CD4-positive, alpha-beta T cell (primary cell): ENCODE measurements at regions of chr1 and their contacts with region 1.

Region 1: GRCh38 chr1:36149237-36149972 is at the start of gene TRAPPC3:
- DNase-seq: peak; percentile 98 to 100 (median 99)
- ATAC-seq: peak; percentile 88
- H3K4me3 ChIP-seq: peak within 1 kb of the TSS; percentile 81
- H3K4me3 Mint-ChIP-seq: peak within 1 kb of the TSS; percentile 98
- H3K27ac ChIP-seq: peak within 1 kb of the TSS; percentile 92 to 95
- H3K27ac Mint-ChIP-seq: peak within 1 kb of the TSS; percentile 95
- H3K4me1 ChIP-seq: peaks cover 65% of the 10 kb centered on the region
- H3K4me1 Mint-ChIP-seq: peaks cover 73% of the 10 kb centered on the region
- H3K27me3 ChIP-seq: no peaks in the 10 kb centered on the region
- H3K27me3 Mint-ChIP-seq: no peaks in the 10 kb centered on the region
- CTCF ChIP-seq: peak; percentile 84
- total RNA-seq, gene TRAPPC3: 18.4 to 21.3 TPM

Region 2: GRCh38 chr1:36088575-36089443 is 60.6 kb before region 1 on chr1 and contains the start of gene ADPRS:
- CTCF ChIA-PET with region 1: interaction called, 3 read pairs
- POLR2A ChIA-PET with region 1: no interaction called
- intact Hi-C with region 1: loop called in 1 of 2 experiments (anchors 1 kb)
- DNase-seq: peak; percentile 83 to 96 (median 88)
- ATAC-seq: peak; percentile 88
- H3K4me3 ChIP-seq: peak within 1 kb of the TSS; percentile 95
- H3K4me3 Mint-ChIP-seq: peak within 1 kb of the TSS; percentile 93
- H3K27ac ChIP-seq: peak within 1 kb of the TSS; percentile 73 to 83
- H3K27ac Mint-ChIP-seq: peak within 1 kb of the TSS; percentile 86
- H3K4me1 ChIP-seq: peaks cover 54% of the 10 kb centered on the region
- H3K4me1 Mint-ChIP-seq: peaks cover 23% of the 10 kb centered on the region
- H3K27me3 ChIP-seq: peaks cover 13 to 14% of the 10 kb centered on the region in 2 experiments
- H3K27me3 Mint-ChIP-seq: peaks cover 21% of the 10 kb centered on the region
- CTCF ChIP-seq: peak; percentile 96
- total RNA-seq, gene ADPRS: 22.6 to 24.6 TPM

Region 3: DNA sequence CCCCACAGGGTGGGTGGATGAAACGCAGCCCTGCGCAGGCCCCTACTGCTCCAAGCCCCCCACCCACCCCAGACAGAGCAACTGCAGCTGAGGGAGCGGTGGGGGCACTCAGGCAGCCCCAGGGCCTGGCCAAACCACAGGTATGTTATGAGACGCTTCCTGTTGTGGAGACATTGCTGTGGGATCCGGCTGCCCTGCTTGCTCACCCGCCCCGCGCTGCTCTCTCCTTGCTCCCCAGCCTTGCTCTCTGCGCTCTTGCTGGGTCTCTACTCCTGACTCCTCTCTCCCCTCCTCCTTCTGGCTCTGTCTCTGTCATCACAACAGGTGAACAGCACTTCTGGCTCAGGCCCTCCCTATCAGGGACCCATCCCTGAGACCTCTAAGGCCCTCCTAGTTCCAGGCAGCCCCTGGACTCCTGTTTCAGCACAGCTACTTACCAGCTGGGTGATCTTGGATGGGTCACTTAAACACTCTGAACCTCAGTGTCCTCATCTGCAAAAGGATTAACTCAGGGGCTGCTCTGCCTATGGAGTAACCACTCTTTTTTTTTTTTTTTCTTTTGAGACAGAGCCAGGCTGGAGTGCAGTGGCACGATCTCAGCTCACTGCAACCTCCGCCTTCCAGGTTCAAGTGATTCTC is 40.2 kb before region 1 on chr1:
- CTCF ChIA-PET with region 1: no interaction called
- POLR2A ChIA-PET with region 1: interaction called, 3 read pairs
- intact Hi-C with region 1: loop called in 1 of 2 experiments (anchors 2 kb)
- DNase-seq: peak; percentile 31 to 68 (median 57)
- ATAC-seq: peak; percentile 98
- H3K4me3 ChIP-seq: no peak overlapping the region
- H3K4me3 Mint-ChIP-seq: peak overlapping the region; percentile 34
- H3K27ac ChIP-seq: no peak overlapping the region
- H3K27ac Mint-ChIP-seq: peak overlapping the region; percentile 78
- H3K4me1 ChIP-seq: peaks cover 15% of the 10 kb centered on the region
- H3K4me1 Mint-ChIP-seq: peaks cover 36% of the 10 kb centered on the region
- H3K27me3 ChIP-seq: no peaks in the 10 kb centered on the region
- H3K27me3 Mint-ChIP-seq: no peaks in the 10 kb centered on the region
- CTCF ChIP-seq: no peak

Region 4: DNA sequence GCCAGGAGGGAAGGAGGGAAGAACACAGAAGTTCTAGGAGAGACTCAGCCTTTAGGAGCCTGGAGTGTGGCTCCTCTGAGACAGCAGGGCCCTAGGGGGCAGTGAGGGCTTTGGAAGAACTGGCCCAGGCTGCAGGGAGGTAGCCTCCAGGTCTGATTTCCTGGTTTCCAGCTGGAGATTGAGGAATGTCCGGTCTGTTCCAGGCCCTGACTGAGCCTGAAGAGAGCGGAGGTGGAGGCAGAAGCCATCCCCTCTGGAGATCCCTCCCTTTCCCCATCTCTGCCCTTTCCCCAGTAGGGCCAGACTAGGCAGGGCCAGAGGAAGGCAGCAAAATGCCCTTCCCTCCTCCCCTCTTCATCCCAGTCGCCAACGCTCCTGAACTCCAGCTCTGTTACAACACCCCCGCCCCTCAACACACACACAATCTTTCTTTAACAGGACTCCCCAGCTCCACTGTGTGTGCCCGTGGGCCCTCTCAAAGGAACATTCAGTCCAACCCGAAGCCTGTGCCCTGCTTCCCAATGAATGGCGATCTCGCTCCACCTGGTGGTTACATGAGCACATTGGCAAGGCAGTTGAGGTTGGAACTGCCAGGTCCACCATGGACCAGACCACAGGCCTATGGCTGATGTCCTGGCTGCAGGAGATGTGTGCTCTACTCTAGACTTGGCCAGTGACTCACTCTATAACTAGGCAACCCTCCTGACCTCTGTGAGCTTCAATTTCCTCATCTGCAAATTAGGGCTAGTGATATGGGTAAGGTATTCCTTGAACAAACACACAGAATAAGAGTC is 38.6 kb after region 1 on chr1:
- CTCF ChIA-PET with region 1: interaction called, 114 read pairs
- POLR2A ChIA-PET with region 1: interaction called, 75 read pairs
- intact Hi-C with region 1: loop called (anchors 1 kb)
- DNase-seq: peak; percentile 70 to 92 (median 76)
- ATAC-seq: peak; percentile 99
- H3K4me3 ChIP-seq: no peak overlapping the region
- H3K4me3 Mint-ChIP-seq: no peak overlapping the region
- H3K27ac ChIP-seq: peak overlapping the region in 1 of 2 donors; percentile 12
- H3K27ac Mint-ChIP-seq: peak overlapping the region; percentile 29
- H3K4me1 ChIP-seq: peaks cover 7% of the 10 kb centered on the region
- H3K4me1 Mint-ChIP-seq: peaks cover 10% of the 10 kb centered on the region
- H3K27me3 ChIP-seq: no peaks in the 10 kb centered on the region
- H3K27me3 Mint-ChIP-seq: no peaks in the 10 kb centered on the region
- CTCF ChIP-seq: peak; percentile 84

Region 5: GRCh38 chr1:36285448-36286101 is 136.2 kb after region 1 on chr1:
- CTCF ChIA-PET with region 1: interaction called, 27 read pairs
- POLR2A ChIA-PET with region 1: interaction called, 16 read pairs
- intact Hi-C with region 1: loop called (anchors 1 kb)
- DNase-seq: peak; percentile 22 to 92 (median 50)
- ATAC-seq: peak; percentile 99
- H3K4me3 ChIP-seq: no peak overlapping the region
- H3K4me3 Mint-ChIP-seq: no peak overlapping the region
- H3K27ac ChIP-seq: no peak overlapping the region
- H3K27ac Mint-ChIP-seq: peak overlapping the region; percentile 34
- H3K4me1 ChIP-seq: no peaks in the 10 kb centered on the region
- H3K4me1 Mint-ChIP-seq: peaks cover 25% of the 10 kb centered on the region
- H3K27me3 ChIP-seq: no peaks in the 10 kb centered on the region
- H3K27me3 Mint-ChIP-seq: no peaks in the 10 kb centered on the region
- CTCF ChIP-seq: peak; percentile 83

Region 6: DNA sequence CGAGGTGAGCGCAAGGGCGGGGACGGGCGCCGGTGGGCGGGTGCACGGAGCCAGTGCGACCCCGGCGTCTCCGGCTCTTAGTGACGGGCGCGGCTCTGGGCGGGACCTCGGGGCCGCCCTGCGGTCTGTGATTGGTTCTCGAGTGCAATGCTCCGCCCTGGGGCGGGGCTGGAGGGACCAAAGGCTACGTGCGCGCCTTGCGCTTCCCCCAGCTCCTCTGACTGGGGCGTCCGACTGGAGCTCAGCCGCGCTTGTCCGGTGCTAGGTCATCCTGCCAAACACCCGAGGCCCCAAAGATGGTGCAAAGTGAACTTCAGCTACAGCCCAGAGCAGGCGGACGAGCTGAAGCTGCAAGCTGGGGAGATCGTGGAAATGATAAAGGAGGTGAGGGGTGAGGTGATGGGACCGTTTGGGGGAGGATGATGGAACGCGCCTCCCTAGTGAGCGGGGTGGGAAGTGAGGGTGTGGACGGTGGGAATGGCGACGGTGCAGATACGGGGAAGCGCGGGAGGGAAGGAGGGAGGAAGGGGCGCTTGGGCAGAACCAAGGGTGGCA is 157.6 kb after region 1 on chr1:
- CTCF ChIA-PET with region 1: interaction called, 13 read pairs
- POLR2A ChIA-PET with region 1: interaction called, 5 read pairs
- intact Hi-C with region 1: loop called in 1 of 2 experiments (anchors 5 kb)
- DNase-seq: peak; percentile 85 to 96 (median 90)
- ATAC-seq: peak; percentile 98
- H3K4me3 ChIP-seq: peak overlapping the region; percentile 64
- H3K4me3 Mint-ChIP-seq: peak overlapping the region; percentile 94
- H3K27ac ChIP-seq: peak overlapping the region in 1 of 2 donors; percentile 34
- H3K27ac Mint-ChIP-seq: peak overlapping the region; percentile 78
- H3K4me1 ChIP-seq: peaks cover 24% of the 10 kb centered on the region
- H3K4me1 Mint-ChIP-seq: peaks cover 16% of the 10 kb centered on the region
- H3K27me3 ChIP-seq: no peaks in the 10 kb centered on the region
- H3K27me3 Mint-ChIP-seq: no peaks in the 10 kb centered on the region
- CTCF ChIP-seq: no peak

Region 7: GRCh38 chr1:36420836-36421664 is 271.6 kb after region 1 on chr1:
- CTCF ChIA-PET with region 1: interaction called, 5 read pairs
- POLR2A ChIA-PET with region 1: interaction called, 3 read pairs
- intact Hi-C with region 1: loop called in 1 of 2 experiments (anchors 2 kb)
- DNase-seq: peak; percentile 80 to 97 (median 92)
- ATAC-seq: peak; percentile 99
- H3K4me3 ChIP-seq: peak overlapping the region; percentile 16
- H3K4me3 Mint-ChIP-seq: peak overlapping the region; percentile 76
- H3K27ac ChIP-seq: peak overlapping the region; percentile 32 to 72
- H3K27ac Mint-ChIP-seq: peak overlapping the region; percentile 81
- H3K4me1 ChIP-seq: peaks cover 26% of the 10 kb centered on the region
- H3K4me1 Mint-ChIP-seq: peaks cover 29% of the 10 kb centered on the region
- H3K27me3 ChIP-seq: no peaks in the 10 kb centered on the region
- H3K27me3 Mint-ChIP-seq: no peaks in the 10 kb centered on the region
- CTCF ChIP-seq: peak; percentile 91